Ascending aorta (tissue), 2 donors: ENCODE measurements at regions of chr3 and their contacts with region 1.

Region 1: GRCh38 chr3:60582288-60582687 is 669.0 kb downstream of the FHIT start:
- DNase-seq: no peak
- H3K4me3 ChIP-seq: no peak overlapping the region
- H3K27ac ChIP-seq: no peak overlapping the region
- H3K4me1 ChIP-seq: no peaks in the 10 kb centered on the region
- H3K27me3 ChIP-seq: no peaks in the 10 kb centered on the region
- CTCF ChIP-seq: peak in 2 of 3 experiments; percentile 15 to 22

Region 2: GRCh38 chr3:60645801-60646200 is 63.5 kb after region 1 on chr3:
- intact Hi-C with region 1: loop called (anchors 5 kb)
- DNase-seq: no peak
- H3K4me3 ChIP-seq: no peak overlapping the region
- H3K27ac ChIP-seq: peak overlapping the region; percentile 33 to 54
- H3K4me1 ChIP-seq: peaks cover 0 to 12% of the 10 kb centered on the region in 2 donors
- H3K27me3 ChIP-seq: no peaks in the 10 kb centered on the region
- CTCF ChIP-seq: no peak

Region 3: GRCh38 chr3:60742606-60743145 is 160.4 kb after region 1 on chr3:
- intact Hi-C with region 1: loop called (anchors 10 kb)
- DNase-seq: no peak
- H3K4me3 ChIP-seq: no peak overlapping the region
- H3K27ac ChIP-seq: peak overlapping the region in 1 of 2 donors; percentile 45
- H3K4me1 ChIP-seq: peaks cover 0 to 8% of the 10 kb centered on the region in 2 donors
- H3K27me3 ChIP-seq: no peaks in the 10 kb centered on the region
- CTCF ChIP-seq: peak in 2 of 3 experiments; percentile 28 to 30